Activated naive CD4-positive, alpha-beta T cell treated with anti-CD3 and anti-CD28 coated beads, Interleukin-2, amount 10 ng/mL, durations not matched to agents 7 days and 5 days (primary cell): ENCODE measurements at regions of chr2 and their contacts with region 1.

Region 1: GRCh38 chr2:169141713-169142352 is 72.5 kb downstream of the DHRS9 start:
- DNase-seq: peak; percentile 68
- H3K4me3 Mint-ChIP-seq: no peak overlapping the region
- H3K27ac Mint-ChIP-seq: no peak overlapping the region
- H3K4me1 Mint-ChIP-seq: no peaks in the 10 kb centered on the region
- H3K27me3 Mint-ChIP-seq: peaks cover 3% of the 10 kb centered on the region

Region 2: DNA sequence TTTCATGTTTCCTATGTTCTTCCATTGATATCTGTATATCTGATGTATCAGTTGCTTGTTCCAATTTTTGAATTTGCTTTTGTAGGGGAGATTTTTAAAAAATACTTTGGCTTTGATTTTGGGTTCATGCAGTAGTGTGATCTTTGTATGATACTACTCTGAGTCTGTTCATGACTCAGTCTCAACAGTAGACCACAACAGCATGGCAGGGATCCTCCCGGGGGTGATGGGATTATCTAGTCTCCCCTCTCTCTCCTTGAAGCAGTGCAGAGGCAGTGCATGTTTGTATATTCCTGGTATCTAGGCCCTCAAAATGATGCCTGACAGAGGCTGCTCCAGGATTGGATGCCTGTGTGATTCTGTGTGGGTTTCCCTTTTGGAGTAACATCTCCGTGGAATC is 185.4 kb before region 1 on chr2:
- CTCF ChIA-PET with region 1: interaction called, 42 read pairs
- DNase-seq: no peak
- H3K4me3 Mint-ChIP-seq: no peak overlapping the region
- H3K27ac Mint-ChIP-seq: no peak overlapping the region
- H3K4me1 Mint-ChIP-seq: peaks cover under 1% of the 10 kb centered on the region
- H3K27me3 Mint-ChIP-seq: peaks cover 23% of the 10 kb centered on the region

Region 3: DNA sequence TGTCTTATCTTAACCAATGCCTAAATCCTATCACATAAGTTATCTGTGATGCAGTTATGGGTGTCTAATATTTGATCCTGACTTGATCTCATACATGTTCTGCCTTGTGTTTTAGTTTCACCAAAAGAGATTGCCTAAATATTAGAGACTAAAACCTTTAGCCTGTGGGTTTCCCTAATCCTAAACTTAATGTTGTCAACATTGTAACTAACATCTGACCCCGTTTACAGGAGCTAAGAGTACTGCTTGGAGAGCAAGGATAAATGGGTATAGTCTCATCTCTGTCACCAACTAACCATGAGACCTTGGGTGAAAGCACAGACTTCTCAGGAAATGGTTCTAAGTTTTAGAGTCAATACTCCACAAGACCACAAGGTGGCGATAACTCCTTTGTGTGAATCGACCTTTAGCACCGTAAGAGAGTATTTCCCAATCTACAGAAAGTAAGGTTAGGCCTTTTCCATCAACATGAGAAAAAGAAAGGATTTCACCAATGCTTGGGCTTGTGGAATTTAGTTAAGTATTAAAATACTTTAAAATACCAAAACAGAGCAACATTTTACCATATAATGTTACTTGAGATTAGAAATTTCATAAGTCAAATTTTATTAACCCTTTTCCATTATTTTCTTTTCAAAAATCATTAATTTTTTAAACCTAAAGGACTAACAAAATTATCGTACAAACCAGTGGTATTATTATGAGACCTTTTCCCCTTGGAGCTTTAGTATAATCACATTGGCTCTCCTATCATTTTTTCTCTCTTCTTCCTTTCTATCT is 180.2 kb before region 1 on chr2:
- CTCF ChIA-PET with region 1: interaction called, 42 read pairs
- DNase-seq: peak; percentile 24
- H3K4me3 Mint-ChIP-seq: no peak overlapping the region
- H3K27ac Mint-ChIP-seq: no peak overlapping the region
- H3K4me1 Mint-ChIP-seq: peaks cover 18% of the 10 kb centered on the region
- H3K27me3 Mint-ChIP-seq: peaks cover 12% of the 10 kb centered on the region

Region 4: GRCh38 chr2:168968342-168968741 is 173.5 kb before region 1 on chr2:
- CTCF ChIA-PET with region 1: interaction called, 19 read pairs
- DNase-seq: no peak
- H3K4me3 Mint-ChIP-seq: no peak overlapping the region
- H3K27ac Mint-ChIP-seq: no peak overlapping the region
- H3K4me1 Mint-ChIP-seq: peaks cover 16% of the 10 kb centered on the region
- H3K27me3 Mint-ChIP-seq: peaks cover 12% of the 10 kb centered on the region